Heart right ventricle (tissue), 16 donors: ENCODE measurements at regions of chr1 and their contacts with region 1.

Region 1: GRCh38 chr1:27154991-27155781 is at the start of gene SLC9A1:
- DNase-seq: peak; percentile 94
- ATAC-seq: peak; percentile 84 to 95 (median 92)
- H3K4me3 ChIP-seq: peak within 1 kb of the TSS; percentile 57 to 86 (median 80)
- H3K27ac ChIP-seq: peak within 1 kb of the TSS; percentile 82 to 97 (median 92)
- H3K4me1 ChIP-seq: peaks cover 15 to 55% (median 43%) of the 10 kb centered on the region in 9 donors
- H3K27me3 ChIP-seq: no peaks in the 10 kb centered on the region
- CTCF ChIP-seq: peak; percentile 50 to 93 (median 83)
- total RNA-seq, gene SLC9A1: 9.4 to 34.4 (median 22.1) TPM

Region 2: DNA sequence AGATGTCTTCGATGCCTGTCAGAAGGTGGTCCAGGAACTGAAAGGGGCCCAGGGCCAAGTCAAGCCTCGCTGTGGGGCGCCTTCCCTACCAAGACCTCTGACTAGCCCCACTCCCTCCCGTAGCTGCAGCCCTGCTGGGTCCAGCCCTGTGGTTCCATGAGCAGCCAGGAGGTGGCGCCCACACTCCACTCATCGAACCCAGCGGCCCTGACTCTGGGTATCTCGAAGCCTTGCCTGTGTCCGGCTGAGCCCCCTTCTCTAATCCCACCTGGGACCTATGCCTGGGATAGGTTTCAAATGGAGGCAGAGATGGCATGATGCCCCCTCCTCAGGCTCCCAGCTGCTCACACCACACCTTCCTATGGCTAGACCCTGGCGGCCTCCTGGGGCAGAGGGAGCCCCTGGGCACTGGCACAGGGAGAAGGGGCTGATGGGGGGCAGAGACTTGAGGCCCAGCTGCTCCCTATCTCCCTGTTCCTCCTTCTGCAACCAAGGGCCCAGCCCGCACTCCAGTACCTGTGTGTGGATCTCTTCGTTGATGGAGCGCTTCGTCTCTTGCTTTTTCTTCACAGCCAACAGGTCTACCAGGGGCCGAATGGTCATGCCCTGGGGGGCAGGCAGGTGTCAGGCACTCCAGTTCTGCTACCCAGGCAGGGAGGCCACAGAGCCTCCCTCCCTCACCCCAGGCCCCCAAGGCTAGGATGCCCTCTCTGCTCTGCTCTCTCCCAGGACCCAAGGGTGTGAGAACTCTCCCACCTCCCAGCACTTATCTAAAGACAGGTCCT is 52.3 kb before region 1 on chr1:
- intact Hi-C with region 1: loop called in 2 of 10 experiments (anchors 5 kb)
- DNase-seq: peak; percentile 75 to 85
- ATAC-seq: peak; percentile 31 to 65 (median 50)
- H3K4me3 ChIP-seq: no peak overlapping the region
- H3K27ac ChIP-seq: no peak overlapping the region
- H3K4me1 ChIP-seq: peaks cover 14 to 36% (median 26%) of the 10 kb centered on the region in 9 donors
- H3K27me3 ChIP-seq: no peaks in the 10 kb centered on the region
- CTCF ChIP-seq: peak; percentile 94 to 98 (median 97)

Region 3: DNA sequence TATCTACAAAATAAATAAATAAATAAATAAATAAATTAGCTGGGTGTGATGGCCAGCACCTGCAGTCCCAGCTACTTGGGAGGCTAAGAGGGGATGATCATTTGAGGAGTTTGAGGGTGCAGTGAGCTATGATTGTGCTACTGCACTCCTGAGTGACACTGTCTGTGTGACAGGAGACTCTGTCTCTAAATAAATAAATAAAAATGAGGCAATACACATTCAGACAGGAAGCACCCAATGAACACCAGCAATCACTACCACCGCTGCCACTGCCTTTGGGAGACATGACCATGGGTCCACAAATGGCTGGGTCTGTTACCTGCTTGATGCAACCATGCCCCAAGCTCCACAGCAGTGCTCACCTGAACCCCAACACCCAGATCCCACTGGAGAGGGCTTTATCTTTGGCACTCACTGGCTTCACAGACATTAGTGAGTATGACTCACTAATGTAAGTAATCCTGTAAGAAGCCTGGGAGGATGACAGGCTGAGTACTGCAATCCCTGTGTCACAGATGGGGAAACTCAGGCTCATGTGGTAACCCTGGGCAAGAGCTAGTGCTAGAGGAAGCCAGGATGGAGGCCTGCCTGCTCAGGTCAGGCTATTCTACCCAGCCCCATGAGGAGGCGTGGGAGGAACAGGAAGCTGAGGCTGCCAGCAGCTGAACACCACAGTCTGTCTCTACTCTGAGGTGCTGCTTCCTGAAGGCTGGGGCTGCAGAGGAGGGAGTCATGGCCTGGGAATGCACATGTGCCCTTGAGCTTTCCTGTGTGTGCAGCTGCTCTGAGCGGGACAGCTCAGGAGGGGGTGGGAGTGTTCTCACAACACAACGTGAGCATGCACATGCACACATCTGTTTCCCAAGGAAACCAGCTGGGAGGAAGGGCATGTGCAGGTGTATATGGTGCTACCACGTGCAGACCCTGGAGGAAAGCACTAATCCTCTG is 43.3 kb before region 1 on chr1:
- intact Hi-C with region 1: loop called in 7 of 10 experiments (anchors 5 kb)
- DNase-seq: peak; percentile 65 to 77
- ATAC-seq: peak; percentile 77 to 95 (median 90)
- H3K4me3 ChIP-seq: no peak overlapping the region
- H3K27ac ChIP-seq: peak overlapping the region in 8 of 10 donors; percentile 21 to 79 (median 55)
- H3K4me1 ChIP-seq: peaks cover 11 to 71% (median 33%) of the 10 kb centered on the region in 9 donors
- H3K27me3 ChIP-seq: no peaks in the 10 kb centered on the region
- CTCF ChIP-seq: peak in 5 of 9 donors; percentile 17 to 49 (median 34)

Region 4: DNA sequence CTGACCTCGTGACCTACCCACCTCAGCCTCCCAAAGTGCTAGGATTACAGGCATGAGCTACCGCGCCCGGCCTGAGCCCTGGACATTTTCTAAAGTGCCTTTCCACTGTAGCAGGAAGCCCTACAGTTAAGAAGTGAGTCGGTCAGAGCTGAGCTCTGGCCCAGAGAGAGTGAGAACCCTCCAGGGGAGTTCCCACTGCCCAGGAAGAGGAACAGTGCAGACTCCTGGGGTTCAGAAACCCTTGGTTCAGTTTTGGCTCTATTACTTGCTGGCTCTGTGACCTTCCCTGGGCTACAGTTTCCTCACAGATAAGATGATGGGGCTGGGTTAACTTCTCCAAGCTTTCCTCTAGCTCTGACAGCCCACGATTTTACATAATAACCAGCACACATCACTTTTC is 21.2 kb before region 1 on chr1:
- intact Hi-C with region 1: loop called in 1 of 10 experiments (anchors 2 kb)
- DNase-seq: no peak
- ATAC-seq: no peak
- H3K4me3 ChIP-seq: no peak overlapping the region
- H3K27ac ChIP-seq: peak overlapping the region in 7 of 10 donors; percentile 35 to 88 (median 64)
- H3K4me1 ChIP-seq: peaks cover 10 to 96% (median 64%) of the 10 kb centered on the region in 9 donors
- H3K27me3 ChIP-seq: no peaks in the 10 kb centered on the region
- CTCF ChIP-seq: no peak